Activated T-helper 2 cell treated with anti-CD3 and anti-CD28 coated beads, Interferon-gamma antibody, Interleukin-2, Interleukin-4, amounts not matched to agents 10 μg/mL and 5 μg/mL and 100 μg/mL, durations not matched to agents 14 hours and 24 hours and 36 hours (primary cell): ENCODE measurements at regions of chr15 and their contacts with region 1.

Region 1: GRCh38 chr15:60720493-60721256 is 241.7 kb upstream of the ICE2 start:
- DNase-seq: peak; percentile 39
- H3K4me3 Mint-ChIP-seq: peak overlapping the region; percentile 28
- H3K27ac Mint-ChIP-seq: peak overlapping the region; percentile 90
- H3K4me1 Mint-ChIP-seq: peaks cover 53% of the 10 kb centered on the region
- H3K27me3 Mint-ChIP-seq: peaks cover 8% of the 10 kb centered on the region

Region 2: GRCh38 chr15:60548101-60548500 is 172.6 kb before region 1 on chr15:
- intact Hi-C with region 1: loop called (anchors 2 kb)
- DNase-seq: peak; percentile 38
- H3K4me3 Mint-ChIP-seq: peak overlapping the region; percentile 63
- H3K27ac Mint-ChIP-seq: peak overlapping the region; percentile 91
- H3K4me1 Mint-ChIP-seq: peaks cover 79% of the 10 kb centered on the region
- H3K27me3 Mint-ChIP-seq: peaks cover 2% of the 10 kb centered on the region

Region 3: GRCh38 chr15:60695713-60696522 is 24.8 kb before region 1 on chr15:
- intact Hi-C with region 1: loop called (anchors 1 kb)
- DNase-seq: peak; percentile 35
- H3K4me3 Mint-ChIP-seq: peak overlapping the region; percentile 22
- H3K27ac Mint-ChIP-seq: peak overlapping the region; percentile 49
- H3K4me1 Mint-ChIP-seq: peaks cover 52% of the 10 kb centered on the region
- H3K27me3 Mint-ChIP-seq: peaks cover 25% of the 10 kb centered on the region

Region 4: GRCh38 chr15:60798821-60799220 is 78.1 kb after region 1 on chr15:
- intact Hi-C with region 1: loop called (anchors 1 kb)
- DNase-seq: no peak
- H3K4me3 Mint-ChIP-seq: no peak overlapping the region
- H3K27ac Mint-ChIP-seq: no peak overlapping the region
- H3K4me1 Mint-ChIP-seq: peaks cover 39% of the 10 kb centered on the region
- H3K27me3 Mint-ChIP-seq: peaks cover 9% of the 10 kb centered on the region

Region 5: GRCh38 chr15:60899322-60899966 is 178.8 kb after region 1 on chr15:
- intact Hi-C with region 1: loop called (anchors 1 kb)
- DNase-seq: no peak
- H3K4me3 Mint-ChIP-seq: no peak overlapping the region
- H3K27ac Mint-ChIP-seq: peak overlapping the region; percentile 64
- H3K4me1 Mint-ChIP-seq: peaks cover 52% of the 10 kb centered on the region
- H3K27me3 Mint-ChIP-seq: peaks cover 14% of the 10 kb centered on the region